ENCODE measurements at regions of chr6 and their contacts with region 1.

Region 1: GRCh38 chr6:96563853-96564252 is 925 bp downstream of the FHL5 start:
- DNase-seq: no peak
- ATAC-seq: no peak
- H3K4me3 ChIP-seq: peak overlapping the region; percentile 33
- H3K27ac ChIP-seq: no peak overlapping the region
- H3K4me1 ChIP-seq: no peaks in the 10 kb centered on the region
- H3K27me3 ChIP-seq: no peaks in the 10 kb centered on the region
- CTCF ChIP-seq: no peak

Region 2: DNA sequence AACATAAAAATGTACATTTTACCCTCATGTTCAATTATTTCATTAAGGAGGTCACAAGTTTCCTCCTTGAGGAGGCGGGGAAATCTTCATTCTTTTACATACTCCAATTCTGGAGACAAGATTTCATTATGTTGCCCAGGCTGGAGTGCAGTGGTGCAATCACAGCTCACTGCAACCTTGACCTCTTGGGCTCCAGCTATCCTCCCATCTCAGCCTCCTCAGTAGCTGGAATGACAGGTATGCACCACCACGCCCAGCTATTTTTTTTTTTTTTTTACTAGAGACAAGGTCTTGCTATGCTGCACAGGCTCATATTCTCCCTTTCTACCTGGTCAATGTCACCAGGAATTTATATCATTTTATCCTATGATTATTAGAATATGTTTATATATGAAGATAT is 462.3 kb before region 1 on chr6:
- intact Hi-C with region 1: no loop called
- DNase-seq: no peak
- ATAC-seq: no peak
- H3K4me3 ChIP-seq: no peak overlapping the region
- H3K27ac ChIP-seq: no peak overlapping the region
- H3K4me1 ChIP-seq: no peaks in the 10 kb centered on the region
- H3K27me3 ChIP-seq: no peaks in the 10 kb centered on the region
- CTCF ChIP-seq: no peak

Region 3: DNA sequence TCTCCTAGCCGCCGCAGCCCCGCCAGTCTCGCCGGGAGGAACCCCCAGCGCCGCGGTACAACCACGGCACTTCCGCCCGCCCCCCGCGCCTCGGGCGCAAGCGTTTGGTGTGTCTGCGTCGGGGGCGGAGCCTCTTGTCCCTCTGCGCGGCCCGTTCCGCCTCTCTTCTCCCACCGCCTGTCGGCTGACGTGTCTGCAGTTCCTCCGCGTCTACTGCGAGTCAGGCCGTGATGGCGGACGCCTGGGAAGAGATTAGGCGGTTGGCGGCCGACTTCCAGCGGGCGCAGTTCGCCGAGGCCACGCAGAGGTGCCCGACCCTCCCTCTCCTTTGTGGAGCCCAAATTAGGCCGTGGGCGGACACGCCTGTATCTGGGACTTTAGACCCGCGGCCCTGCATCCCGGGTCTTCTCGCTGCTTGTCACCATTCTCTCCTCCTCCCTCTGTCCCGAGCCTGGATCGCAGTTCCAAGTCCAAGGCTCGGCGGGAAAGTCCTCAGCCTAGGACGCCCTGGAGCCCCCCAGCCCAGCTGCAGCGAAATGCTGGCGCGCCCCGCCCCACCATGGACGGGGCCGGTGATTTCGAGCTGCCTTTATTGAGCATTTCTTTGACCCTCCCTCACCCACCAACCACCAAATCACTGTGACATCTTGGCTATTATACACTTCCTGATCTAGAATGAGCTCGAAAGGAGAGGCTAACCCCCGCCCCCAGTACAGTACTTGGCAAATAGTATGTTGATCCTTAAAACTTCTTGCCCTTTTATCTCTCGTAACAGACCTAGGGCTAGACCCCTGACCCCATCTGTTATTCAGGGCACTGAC is 42.0 kb before region 1 on chr6 and contains the start of gene UFL1:
- intact Hi-C with region 1: loop called in 1 of 2 experiments (anchors 5 kb)
- DNase-seq: peak; percentile 94 to 97
- ATAC-seq: peak; percentile 98 to 100 (median 100)
- H3K4me3 ChIP-seq: peak within 1 kb of the TSS; percentile 94
- H3K27ac ChIP-seq: peak within 1 kb of the TSS; percentile 98
- H3K4me1 ChIP-seq: peaks cover 18% of the 10 kb centered on the region
- H3K27me3 ChIP-seq: no peaks in the 10 kb centered on the region
- CTCF ChIP-seq: no peak
- total RNA-seq, gene UFL1: 24.7 to 26.7 (median 25.9) TPM

Region 4: GRCh38 chr6:96675597-96675996 is 111.7 kb after region 1 on chr6:
- intact Hi-C with region 1: no loop called
- DNase-seq: no peak
- ATAC-seq: no peak
- H3K4me3 ChIP-seq: no peak overlapping the region
- H3K27ac ChIP-seq: no peak overlapping the region
- H3K4me1 ChIP-seq: no peaks in the 10 kb centered on the region
- H3K27me3 ChIP-seq: no peaks in the 10 kb centered on the region
- CTCF ChIP-seq: no peak